ENCODE measurements at regions of chr17 and their contacts with region 1.

Region 1: DNA sequence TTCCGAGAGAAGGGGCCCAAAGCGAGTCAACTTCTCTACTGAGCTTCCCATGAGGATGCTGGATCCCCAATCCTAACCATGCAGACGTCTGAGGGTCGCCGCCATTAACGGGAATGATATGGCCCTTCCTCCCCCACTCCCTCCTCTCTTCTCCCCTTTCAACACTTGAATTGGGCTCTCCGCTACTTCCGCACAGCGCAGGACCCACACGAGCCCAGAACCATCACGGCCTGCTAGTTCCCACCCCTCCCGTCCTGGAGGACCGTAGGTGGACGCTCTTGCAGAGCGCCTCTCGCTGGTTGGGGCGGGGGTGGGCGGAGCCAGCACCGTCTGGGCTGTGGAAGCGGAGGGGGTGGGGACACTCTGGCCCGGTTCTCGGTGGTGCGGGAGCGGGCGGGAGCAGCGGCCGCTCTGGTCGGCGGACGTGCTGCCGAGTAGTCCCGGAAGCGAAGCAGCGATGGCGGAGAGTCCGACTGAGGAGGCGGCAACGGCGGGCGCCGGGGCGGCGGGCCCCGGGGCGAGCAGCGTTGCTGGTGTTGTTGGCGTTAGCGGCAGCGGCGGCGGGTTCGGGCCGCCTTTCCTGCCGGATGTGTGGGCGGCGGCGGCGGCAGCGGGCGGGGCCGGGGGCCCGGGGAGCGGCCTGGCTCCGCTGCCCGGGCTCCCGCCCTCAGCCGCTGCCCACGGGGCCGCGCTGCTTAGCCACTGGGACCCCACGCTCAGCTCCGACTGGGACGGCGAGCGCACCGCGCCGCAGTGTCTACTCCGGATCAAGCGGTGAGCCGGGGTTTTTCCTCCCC is at the start of gene UBE2Z:
- DNase-seq: peak; percentile 95 to 97
- ATAC-seq: peak; percentile 98
- H3K4me3 ChIP-seq: peak within 1 kb of the TSS; percentile 71 to 98
- H3K27ac ChIP-seq: peak within 1 kb of the TSS; percentile 33 to 64
- H3K4me1 ChIP-seq: no peaks in the 10 kb centered on the region
- H3K27me3 ChIP-seq: no peaks in the 10 kb centered on the region
- total RNA-seq, gene UBE2Z: 67.6 to 84.0 TPM

Region 2: GRCh38 chr17:48892940-48893645 is 15.2 kb before region 1 on chr17:
- intact Hi-C with region 1: loop called in 1 of 2 experiments (anchors 1 kb)
- DNase-seq: peak in 1 of 2 donors; percentile 54
- ATAC-seq: peak; percentile 0
- H3K4me3 ChIP-seq: peak overlapping the region; percentile 20 to 30
- H3K27ac ChIP-seq: no peak overlapping the region
- H3K4me1 ChIP-seq: no peaks in the 10 kb centered on the region
- H3K27me3 ChIP-seq: no peaks in the 10 kb centered on the region

Region 3: GRCh38 chr17:48925991-48926342 is 17.7 kb after region 1 on chr17:
- intact Hi-C with region 1: loop called in 1 of 2 experiments (anchors 2 kb)
- DNase-seq: peak in 1 of 2 donors; percentile 37
- ATAC-seq: no peak
- H3K4me3 ChIP-seq: no peak overlapping the region
- H3K27ac ChIP-seq: no peak overlapping the region
- H3K4me1 ChIP-seq: no peaks in the 10 kb centered on the region
- H3K27me3 ChIP-seq: no peaks in the 10 kb centered on the region

Region 4: DNA sequence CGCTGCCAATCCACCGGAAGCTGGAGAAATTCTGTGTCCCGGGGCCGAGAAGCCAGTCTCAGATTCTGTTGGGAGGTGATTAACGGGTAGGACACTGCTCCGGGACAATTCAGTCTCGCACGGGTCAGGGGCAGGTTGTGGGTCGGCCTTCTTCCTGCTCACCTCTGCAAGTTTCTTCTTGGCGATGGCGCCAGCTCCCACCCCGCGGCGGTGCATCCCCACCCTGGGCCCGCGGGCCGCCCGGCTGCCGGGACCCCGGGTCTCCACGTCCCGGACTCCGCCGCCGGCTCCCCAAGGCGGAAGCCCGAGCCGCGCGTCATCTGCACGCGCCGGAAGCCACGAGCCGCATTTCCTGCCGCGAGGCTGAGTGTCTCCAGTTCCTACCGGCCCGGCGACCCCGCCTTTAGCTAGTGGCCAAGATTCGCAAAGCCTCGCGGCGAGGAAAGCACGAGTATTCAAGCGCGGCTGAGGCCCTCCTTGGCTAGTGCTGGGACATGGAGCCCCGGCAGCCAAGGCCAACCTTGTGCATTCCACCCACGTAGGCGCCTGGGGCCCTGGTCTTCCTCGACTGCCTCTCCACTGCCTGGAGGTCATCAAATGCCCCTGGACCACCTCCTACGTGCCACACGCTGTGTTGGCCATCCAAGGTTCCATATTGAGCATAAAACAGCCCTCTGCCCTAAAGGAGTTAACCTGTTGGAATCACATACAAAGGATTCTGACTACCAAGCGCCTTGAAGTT is 36.4 kb after region 1 on chr17 and contains the start of gene SNF8:
- intact Hi-C with region 1: loop called in 1 of 2 experiments (anchors 5 kb)
- DNase-seq: peak; percentile 95 to 98
- ATAC-seq: peak; percentile 95
- H3K4me3 ChIP-seq: peak within 1 kb of the TSS; percentile 74 to 93
- H3K27ac ChIP-seq: peak within 1 kb of the TSS in 1 of 2 donors; percentile 85
- H3K4me1 ChIP-seq: no peaks in the 10 kb centered on the region
- H3K27me3 ChIP-seq: no peaks in the 10 kb centered on the region
- total RNA-seq, gene SNF8: 78.8 to 82.9 TPM

Measured in aorta (tissue), 5 donors.